Kidney (tissue), 22 donors: ENCODE measurements at regions of chr2 and their contacts with region 1.

Region 1: DNA sequence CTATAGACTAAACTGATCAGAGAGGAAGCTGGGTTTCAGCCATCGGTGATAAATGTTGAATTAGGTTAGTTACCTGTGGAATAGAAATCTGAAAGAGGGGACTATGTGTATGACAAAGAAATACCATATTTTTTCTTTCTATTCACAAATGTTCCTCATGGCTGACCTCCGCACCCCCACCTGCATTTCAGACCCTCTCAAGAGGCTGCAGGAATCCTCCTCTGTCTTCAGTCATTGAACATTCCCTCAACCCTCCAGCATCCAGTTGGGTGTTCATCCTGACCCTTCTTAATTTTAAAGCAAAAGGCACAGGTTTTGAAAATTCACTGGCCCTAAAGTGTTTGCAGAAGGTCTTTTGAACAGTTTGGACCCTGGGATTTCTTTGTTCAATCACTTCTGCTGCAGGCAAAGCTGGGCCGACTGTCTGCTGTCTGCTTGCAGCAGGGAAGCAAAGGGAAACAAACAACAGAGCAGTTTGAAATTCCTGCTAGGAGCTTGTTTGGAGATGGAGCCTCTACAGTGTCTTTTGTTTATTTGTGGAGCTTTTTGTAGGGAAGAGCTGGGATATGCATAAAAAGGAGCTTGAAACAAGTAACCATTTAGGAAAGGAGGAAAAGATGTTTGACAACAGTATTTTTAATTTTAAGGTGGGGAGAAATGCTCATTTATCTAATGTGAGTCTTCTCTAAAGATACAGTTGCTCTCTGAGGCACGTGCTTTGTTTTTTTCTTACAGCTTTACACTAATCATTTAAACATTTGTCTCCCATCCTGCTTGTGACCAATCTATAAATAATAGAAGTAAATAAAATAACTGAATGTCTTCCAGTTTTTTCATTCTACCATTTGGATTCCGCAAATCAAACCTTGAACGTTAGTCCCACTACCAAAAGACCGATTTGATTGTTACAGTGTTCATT is 213.3 kb upstream of the MMADHC start:
- DNase-seq: no peak
- H3K4me3 ChIP-seq: no peak overlapping the region
- H3K27ac ChIP-seq: no peak overlapping the region
- H3K4me1 ChIP-seq: peaks cover 0 to 5% (median 0%) of the 10 kb centered on the region in 3 donors
- H3K27me3 ChIP-seq: no peaks in the 10 kb centered on the region
- CTCF ChIP-seq: no peak

Region 2: DNA sequence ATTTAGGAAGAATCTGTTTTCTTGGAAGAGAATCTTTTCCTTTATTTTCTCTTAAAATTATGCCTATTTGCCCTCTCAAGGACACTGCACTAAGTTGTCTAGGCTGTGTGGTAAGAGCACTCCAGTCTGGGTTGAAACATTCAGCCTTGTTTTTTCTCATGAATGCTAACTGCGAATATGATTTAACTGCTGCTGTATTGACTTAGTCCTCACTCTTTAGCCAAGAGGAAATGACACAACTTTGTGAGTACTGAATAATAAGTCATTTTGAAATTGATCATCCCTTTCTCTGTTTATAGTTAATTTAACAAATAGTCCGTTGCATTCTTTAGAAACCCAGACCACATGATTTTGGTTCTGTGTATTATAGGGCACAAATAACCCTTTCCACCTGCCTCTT is 691.1 kb after region 1 on chr2:
- intact Hi-C with region 1: loop called (anchors 5 kb)
- DNase-seq: no peak
- H3K4me3 ChIP-seq: no peak overlapping the region
- H3K27ac ChIP-seq: no peak overlapping the region
- H3K4me1 ChIP-seq: no peaks in the 10 kb centered on the region
- H3K27me3 ChIP-seq: no peaks in the 10 kb centered on the region
- CTCF ChIP-seq: no peak

Region 3: DNA sequence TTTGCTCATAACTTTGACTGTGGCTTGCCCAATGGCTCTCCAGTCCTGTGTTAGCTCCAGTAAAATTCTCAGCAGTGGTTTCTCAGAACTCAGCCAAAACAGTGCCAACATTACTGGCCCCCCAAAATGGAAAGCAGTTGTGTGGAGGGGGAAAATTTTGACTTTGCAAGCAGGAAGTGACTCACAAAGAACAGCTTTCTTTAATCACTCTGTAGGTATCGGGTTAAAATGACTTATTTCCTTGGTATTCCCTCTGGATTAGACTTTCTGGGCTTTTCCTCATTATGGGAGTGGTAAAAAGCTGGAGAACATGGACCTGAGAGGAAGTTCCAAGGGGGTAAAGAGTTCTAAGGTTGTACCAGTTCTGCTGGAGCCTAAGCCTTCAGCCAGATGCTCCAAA is 862.3 kb after region 1 on chr2:
- intact Hi-C with region 1: no loop called
- DNase-seq: no peak
- H3K4me3 ChIP-seq: no peak overlapping the region
- H3K27ac ChIP-seq: no peak overlapping the region
- H3K4me1 ChIP-seq: peaks cover 0 to 2% (median 0%) of the 10 kb centered on the region in 3 donors
- H3K27me3 ChIP-seq: no peaks in the 10 kb centered on the region
- CTCF ChIP-seq: no peak